AG04450 (cell line): ENCODE measurements at regions of chr2 and their contacts with region 1.

Region 1: GRCh38 chr2:120312861-120313694 is 32.9 kb upstream of the INHBB start:
- DNase-seq: peak; percentile 49
- H3K4me3 ChIP-seq: peak overlapping the region; percentile 63
- H3K27ac ChIP-seq: peak overlapping the region; percentile 68
- H3K27me3 ChIP-seq: peaks cover 2% of the 10 kb centered on the region
- CTCF ChIP-seq: peak; percentile 98

Region 2: GRCh38 chr2:119753041-119753929 is 559.8 kb before region 1 on chr2:
- CTCF ChIA-PET with region 1: interaction called, 11 read pairs
- POLR2A ChIA-PET with region 1: no interaction called
- DNase-seq: no peak
- H3K4me3 ChIP-seq: no peak overlapping the region
- H3K27ac ChIP-seq: no peak overlapping the region
- H3K27me3 ChIP-seq: no peaks in the 10 kb centered on the region
- CTCF ChIP-seq: peak; percentile 66

Region 3: GRCh38 chr2:119795309-119796303 is 517.5 kb before region 1 on chr2:
- CTCF ChIA-PET with region 1: no interaction called
- POLR2A ChIA-PET with region 1: no interaction called
- DNase-seq: no peak
- H3K4me3 ChIP-seq: no peak overlapping the region
- H3K27ac ChIP-seq: no peak overlapping the region
- H3K27me3 ChIP-seq: no peaks in the 10 kb centered on the region
- CTCF ChIP-seq: no peak

Region 4: GRCh38 chr2:120252225-120253021 is 60.7 kb before region 1 on chr2 and contains the start of gene RALB:
- CTCF ChIA-PET with region 1: interaction called, 40 read pairs
- POLR2A ChIA-PET with region 1: interaction called, 7 read pairs
- DNase-seq: peak; percentile 95
- H3K4me3 ChIP-seq: peak within 1 kb of the TSS; percentile 90
- H3K27ac ChIP-seq: peak within 1 kb of the TSS; percentile 48
- H3K27me3 ChIP-seq: peaks cover 14% of the 10 kb centered on the region
- CTCF ChIP-seq: no peak
- polyA plus RNA-seq, gene RALB: 55.1 and 69.6 TPM in 2 replicates

Region 5: DNA sequence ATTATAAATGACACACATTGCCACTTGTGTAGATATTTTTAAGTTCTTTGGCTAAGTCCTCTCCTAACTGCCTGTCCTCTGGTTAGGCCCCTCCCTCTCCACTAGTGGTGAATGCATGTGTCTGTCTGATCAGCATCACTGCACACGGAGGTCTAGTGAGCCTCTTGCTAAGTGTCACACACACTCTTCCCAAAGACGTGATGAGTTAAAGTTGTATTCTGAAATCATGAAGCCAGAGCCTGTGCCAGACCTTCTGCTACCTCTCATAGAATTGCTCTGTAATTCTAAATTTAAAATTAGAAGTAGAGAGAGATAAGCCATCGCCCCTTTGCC is 19.1 kb before region 1 on chr2:
- CTCF ChIA-PET with region 1: interaction called, 50 read pairs
- POLR2A ChIA-PET with region 1: interaction called, 8 read pairs
- DNase-seq: no peak
- H3K4me3 ChIP-seq: no peak overlapping the region
- H3K27ac ChIP-seq: no peak overlapping the region
- H3K27me3 ChIP-seq: no peaks in the 10 kb centered on the region
- CTCF ChIP-seq: no peak

Region 6: DNA sequence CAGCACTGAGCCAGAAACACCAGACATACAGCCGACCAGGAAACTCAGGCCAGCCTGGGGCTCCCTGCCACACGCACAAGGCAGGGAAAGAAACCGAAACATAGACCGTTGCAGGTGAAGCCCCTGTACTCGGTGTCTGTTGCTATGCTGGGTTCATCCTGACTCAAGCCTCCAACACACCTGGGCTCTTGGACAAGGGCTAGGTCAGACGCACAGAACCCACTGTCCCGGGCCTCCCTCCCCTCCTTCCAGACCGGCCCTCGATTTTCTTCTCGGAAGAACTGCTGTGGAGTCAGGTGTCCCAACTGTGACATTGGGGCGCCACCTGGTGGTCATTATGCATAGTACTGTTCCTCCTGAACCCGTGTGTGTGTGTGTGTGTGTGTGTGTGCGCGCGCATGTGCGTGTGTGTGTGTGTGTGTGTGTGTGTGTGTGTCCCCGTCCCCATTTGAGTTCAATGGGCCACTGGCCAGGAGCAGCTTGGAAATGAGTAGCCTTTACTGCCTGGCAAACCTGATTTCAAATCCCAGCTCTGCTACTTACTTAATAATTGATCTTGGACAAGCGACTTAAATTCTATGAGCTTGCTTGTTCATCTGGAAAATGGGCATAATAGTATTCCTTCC is 367.2 kb after region 1 on chr2:
- CTCF ChIA-PET with region 1: interaction called, 48 read pairs
- POLR2A ChIA-PET with region 1: no interaction called
- DNase-seq: peak; percentile 70
- H3K4me3 ChIP-seq: no peak overlapping the region
- H3K27ac ChIP-seq: no peak overlapping the region
- H3K27me3 ChIP-seq: peaks cover 29% of the 10 kb centered on the region
- CTCF ChIP-seq: peak; percentile 74